ENCODE measurements at regions of chr14 and their contacts with region 1.

Region 1: GRCh38 chr14:100850841-100851585 is 25.1 kb downstream of the MEG3 start:
- DNase-seq: peak; percentile 44 to 83 (median 69)
- ATAC-seq: peak; percentile 86
- H3K4me3 ChIP-seq: no peak overlapping the region
- H3K4me3 Mint-ChIP-seq: peak overlapping the region in 1 of 10 donors; percentile 8
- H3K27ac ChIP-seq: no peak overlapping the region
- H3K27ac Mint-ChIP-seq: peak overlapping the region in 1 of 9 donors; percentile 4
- H3K4me1 ChIP-seq: peaks cover 0 to 8% of the 10 kb centered on the region in 2 donors
- H3K4me1 Mint-ChIP-seq: peaks cover 0 to 7% (median 0%) of the 10 kb centered on the region in 7 donors
- H3K27me3 ChIP-seq: no peaks in the 10 kb centered on the region
- H3K27me3 Mint-ChIP-seq: no peaks in the 10 kb centered on the region

Region 2: DNA sequence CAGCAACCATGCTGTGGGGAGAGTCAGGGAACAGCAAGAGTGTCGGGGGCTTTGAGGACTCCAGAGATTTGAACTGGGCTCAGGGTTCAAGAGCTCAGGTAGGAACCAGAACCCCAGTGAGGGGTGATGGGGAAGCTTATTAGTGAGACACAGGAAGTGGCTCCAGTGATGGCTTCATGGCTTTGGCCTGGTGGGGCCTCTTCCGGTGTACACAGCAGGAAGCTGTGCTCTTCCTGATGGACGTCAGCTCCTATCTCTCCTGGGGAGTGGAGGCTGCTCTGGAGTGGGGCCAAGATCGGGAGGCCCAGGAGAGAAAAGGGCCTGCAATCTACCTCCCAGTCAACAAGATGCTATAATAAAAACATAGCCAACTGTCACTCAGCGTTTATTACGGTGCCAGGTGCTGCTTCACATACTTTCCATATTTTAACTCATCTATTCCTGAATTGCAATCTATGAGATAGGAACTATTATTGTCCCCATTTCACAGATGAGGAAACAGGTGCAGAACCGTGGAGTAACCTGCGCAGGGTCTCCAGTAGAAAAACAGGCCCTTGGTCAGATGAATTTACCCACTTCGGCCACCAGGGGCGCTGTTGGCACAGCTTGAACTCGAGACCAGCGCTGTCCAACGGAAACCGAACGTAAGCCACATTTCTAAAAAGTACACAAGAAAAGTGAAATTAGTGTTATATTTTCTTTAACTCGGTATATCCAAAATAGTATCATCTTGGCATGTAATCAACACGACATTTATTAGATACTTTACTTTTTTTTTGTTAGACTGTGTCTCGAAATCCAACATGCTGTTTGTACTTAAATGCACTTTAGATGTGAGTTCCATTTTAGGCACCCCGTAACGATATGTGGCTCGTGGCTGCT is 187.9 kb before region 1 on chr14:
- CTCF ChIA-PET with region 1: no interaction called
- POLR2A ChIA-PET with region 1: no interaction called
- intact Hi-C with region 1: loop called in 1 of 2 experiments (anchors 2 kb)
- DNase-seq: peak in 8 of 9 donors; percentile 30 to 66 (median 52)
- ATAC-seq: peak; percentile 73
- H3K4me3 ChIP-seq: no peak overlapping the region
- H3K4me3 Mint-ChIP-seq: no peak overlapping the region
- H3K27ac ChIP-seq: no peak overlapping the region
- H3K27ac Mint-ChIP-seq: peak overlapping the region in 1 of 9 donors; percentile 36
- H3K4me1 ChIP-seq: no peaks in the 10 kb centered on the region
- H3K4me1 Mint-ChIP-seq: peaks cover 0 to 9% (median 1%) of the 10 kb centered on the region in 7 donors
- H3K27me3 ChIP-seq: no peaks in the 10 kb centered on the region
- H3K27me3 Mint-ChIP-seq: peaks cover 0 to 15% (median 9%) of the 10 kb centered on the region in 5 donors

Region 3: GRCh38 chr14:100955201-100955600 is 104.2 kb after region 1 on chr14:
- CTCF ChIA-PET with region 1: no interaction called
- POLR2A ChIA-PET with region 1: no interaction called
- intact Hi-C with region 1: no loop called
- DNase-seq: no peak
- ATAC-seq: no peak
- H3K4me3 ChIP-seq: no peak overlapping the region
- H3K4me3 Mint-ChIP-seq: no peak overlapping the region
- H3K27ac ChIP-seq: no peak overlapping the region
- H3K27ac Mint-ChIP-seq: no peak overlapping the region
- H3K4me1 ChIP-seq: no peaks in the 10 kb centered on the region
- H3K4me1 Mint-ChIP-seq: no peaks in the 10 kb centered on the region
- H3K27me3 ChIP-seq: no peaks in the 10 kb centered on the region
- H3K27me3 Mint-ChIP-seq: peaks cover 9 to 44% (median 18%) of the 10 kb centered on the region in 5 donors

Region 4: DNA sequence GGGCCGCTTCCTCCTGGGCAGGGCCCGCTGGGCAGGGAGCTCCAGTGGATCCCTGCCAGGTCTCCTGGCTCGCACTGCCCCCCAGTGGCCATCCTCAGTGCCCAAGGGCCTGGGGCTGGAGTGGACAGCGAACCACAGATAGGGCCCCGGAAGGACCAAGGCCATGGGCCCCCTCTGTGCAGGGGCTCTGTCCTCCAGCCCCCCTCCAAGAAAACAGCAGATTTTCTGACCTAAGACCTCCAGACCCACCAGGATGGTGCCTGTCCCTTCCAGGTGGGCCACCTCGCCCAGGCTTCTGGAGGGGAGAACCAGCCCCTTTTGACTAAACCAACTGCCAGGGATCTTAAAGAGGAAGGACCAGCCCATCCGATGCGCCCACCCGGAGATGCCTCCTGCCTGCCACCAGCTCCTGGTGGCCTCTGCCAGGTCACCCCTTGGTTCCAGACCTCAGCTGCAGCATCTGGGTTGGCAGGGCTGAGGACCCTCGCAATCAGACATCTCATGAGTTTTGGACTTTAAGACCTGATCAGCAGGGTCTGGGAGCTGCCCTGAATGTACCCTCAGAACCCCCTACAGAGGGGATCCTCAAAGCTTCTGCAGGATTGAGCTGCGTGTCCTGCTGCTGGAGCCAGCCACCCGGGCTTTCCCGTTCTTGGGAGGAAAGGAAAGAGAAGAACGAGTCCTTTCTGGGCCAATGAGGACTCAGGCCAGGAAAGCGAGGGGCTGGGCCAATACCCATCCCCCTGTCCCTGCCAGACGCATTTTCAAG is 384.5 kb after region 1 on chr14:
- CTCF ChIA-PET with region 1: no interaction called
- POLR2A ChIA-PET with region 1: no interaction called
- intact Hi-C with region 1: loop called in 1 of 2 experiments (anchors 5 kb)
- DNase-seq: peak in 1 of 9 donors; percentile 37
- ATAC-seq: peak; percentile 43
- H3K4me3 ChIP-seq: no peak overlapping the region
- H3K4me3 Mint-ChIP-seq: no peak overlapping the region
- H3K27ac ChIP-seq: no peak overlapping the region
- H3K27ac Mint-ChIP-seq: no peak overlapping the region
- H3K4me1 ChIP-seq: no peaks in the 10 kb centered on the region
- H3K4me1 Mint-ChIP-seq: no peaks in the 10 kb centered on the region
- H3K27me3 ChIP-seq: no peaks in the 10 kb centered on the region
- H3K27me3 Mint-ChIP-seq: peaks cover 0 to 19% (median 3%) of the 10 kb centered on the region in 5 donors

Measured in naive thymus-derived CD4-positive, alpha-beta T cell (primary cell).